Dorsolateral prefrontal cortex (tissue), 120 donors: ENCODE measurements at regions of chr12 and their contacts with region 1.

Region 1: DNA sequence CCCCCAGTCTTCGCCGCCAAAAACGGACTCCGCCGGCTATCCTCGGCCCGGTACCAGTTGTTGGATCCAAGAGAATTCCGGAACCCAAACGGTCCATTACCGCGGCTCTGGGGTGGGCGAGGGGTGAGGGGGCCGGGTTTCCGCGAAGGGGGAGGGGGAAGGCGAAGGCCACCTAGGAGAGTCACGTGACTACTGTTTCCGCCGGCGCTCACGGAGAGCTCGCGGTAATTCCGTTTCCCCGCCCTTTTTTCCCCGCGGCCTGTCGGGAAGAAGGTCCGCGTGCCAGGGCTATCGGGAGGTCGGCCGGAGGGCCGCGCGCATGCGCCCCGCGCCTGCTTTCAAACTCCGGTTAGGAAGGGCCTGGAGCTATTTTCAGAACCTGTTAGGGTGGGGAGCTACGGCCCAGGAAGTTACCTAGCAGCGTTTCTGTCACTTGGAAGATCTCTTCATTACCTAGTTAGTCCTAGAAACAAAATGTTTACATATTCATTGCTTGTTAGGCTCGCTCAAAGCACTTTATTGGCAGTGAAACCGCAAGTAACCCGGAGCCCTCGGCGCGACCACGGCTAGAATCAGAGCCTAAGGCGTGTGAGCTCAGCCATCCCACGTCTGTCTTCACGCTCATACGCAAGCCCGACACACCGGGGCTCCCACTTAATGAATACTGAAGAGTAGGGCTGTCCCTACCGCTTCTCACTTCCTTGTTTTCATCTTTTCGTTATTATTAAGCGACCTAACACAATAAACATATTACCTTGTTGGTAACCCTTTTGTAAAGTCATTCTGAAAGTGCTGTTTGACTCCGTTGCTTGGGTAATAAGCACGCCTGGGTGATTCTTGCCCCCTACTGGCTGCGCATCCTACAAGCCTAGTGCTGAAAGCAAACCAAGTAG is 624 bp upstream of the SBNO1 start:
- DNase-seq: peak; percentile 94 to 97 (median 97)
- H3K4me3 ChIP-seq: peak overlapping the region; percentile 56 to 97 (median 87)
- H3K27ac ChIP-seq: peak overlapping the region; percentile 76 to 99 (median 97)
- H3K27me3 ChIP-seq: no peaks in the 10 kb centered on the region
- CTCF ChIP-seq: peak; percentile 31 to 82 (median 71)

Region 2: DNA sequence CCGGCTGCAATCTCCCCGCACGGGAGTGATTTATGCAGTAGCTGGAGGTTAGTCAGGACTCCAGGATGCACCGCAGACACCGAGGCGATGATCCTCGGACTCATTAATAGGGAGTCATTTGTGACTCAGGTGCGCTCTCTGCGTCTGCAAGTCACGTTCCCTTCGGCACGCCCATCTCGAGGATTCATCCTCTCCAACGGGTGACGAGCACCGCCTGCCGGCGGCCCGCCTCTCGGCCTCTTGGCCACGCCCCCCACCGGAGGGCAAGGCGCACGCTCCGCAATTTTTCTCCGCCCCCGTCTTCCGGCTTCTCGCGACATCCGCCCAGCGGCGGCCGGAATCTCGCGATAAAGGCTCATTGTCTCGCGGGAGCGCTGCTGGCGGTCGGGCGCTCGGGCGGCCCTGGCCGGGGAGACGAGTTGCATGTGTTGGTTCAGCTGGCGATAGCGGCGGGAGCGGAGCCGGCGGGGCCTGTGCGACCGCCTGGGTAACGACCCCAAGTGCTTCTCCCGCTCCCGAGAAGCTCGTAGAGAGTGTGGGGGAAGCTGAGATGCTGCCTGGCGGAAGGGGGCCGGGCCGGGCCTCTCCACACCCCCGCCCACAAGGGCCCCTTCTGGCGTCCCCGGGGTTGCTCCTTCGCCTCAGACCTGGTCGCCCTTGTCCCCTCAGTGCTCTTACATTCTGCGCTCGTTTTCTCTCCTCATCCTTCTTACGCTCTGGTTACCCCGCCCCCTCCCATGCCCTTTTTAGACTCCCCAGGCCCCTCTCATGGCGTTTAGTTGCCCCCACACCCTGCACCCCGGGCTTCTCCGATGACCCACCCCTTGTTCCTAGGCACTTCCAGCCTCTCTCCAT is 612.6 kb before region 1 on chr12 and contains the start of gene DENR:
- intact Hi-C with region 1: loop called in 1 of 2 experiments (anchors 2 kb)
- DNase-seq: peak; percentile 92 to 98 (median 96)
- H3K4me3 ChIP-seq: peak within 1 kb of the TSS; percentile 66 to 99 (median 94)
- H3K27ac ChIP-seq: peak within 1 kb of the TSS in 58 of 59 donors; percentile 36 to 97 (median 83)
- H3K27me3 ChIP-seq: no peaks in the 10 kb centered on the region
- CTCF ChIP-seq: peak; percentile 85 to 99 (median 96)
- total RNA-seq, gene DENR: 23.3 to 54.9 (median 38.1) TPM

Region 3: GRCh38 chr12:123232807-123233543 is 132.3 kb before region 1 on chr12 and contains the starts of genes MPHOSPH9 and MTRFR:
- intact Hi-C with region 1: loop called in 1 of 2 experiments (anchors 1 kb)
- DNase-seq: peak; percentile 96 to 99 (median 99)
- H3K4me3 ChIP-seq: peak within 1 kb of the TSS; percentile 75 to 100 (median 96)
- H3K27ac ChIP-seq: peak within 1 kb of the TSS; percentile 63 to 99 (median 94)
- H3K27me3 ChIP-seq: no peaks in the 10 kb centered on the region
- CTCF ChIP-seq: peak in 16 of 56 donors; percentile 5 to 44 (median 16)
- total RNA-seq, gene MPHOSPH9: 36.7 to 91.4 (median 60.7) TPM
- total RNA-seq, gene MTRFR: 13.4 to 27.6 (median 20.0) TPM

Region 4: GRCh38 chr12:123382684-123383083 is 17.4 kb after region 1 on chr12:
- intact Hi-C with region 1: loop called (anchors 1 to 2 kb)
- DNase-seq: no peak
- H3K4me3 ChIP-seq: peak overlapping the region in 11 of 59 donors; percentile 74 to 88 (median 82)
- H3K27ac ChIP-seq: peak overlapping the region in 1 of 59 donors; percentile 81
- H3K27me3 ChIP-seq: no peaks in the 10 kb centered on the region
- CTCF ChIP-seq: no peak

Region 5: GRCh38 chr12:123580772-123581171 is 215.5 kb after region 1 on chr12:
- intact Hi-C with region 1: loop called in 1 of 2 experiments (anchors 1 kb)
- DNase-seq: no peak
- H3K4me3 ChIP-seq: no peak overlapping the region
- H3K27ac ChIP-seq: peak overlapping the region in 1 of 59 donors; percentile 3
- H3K27me3 ChIP-seq: no peaks in the 10 kb centered on the region
- CTCF ChIP-seq: no peak